ENCODE measurements at regions of chr9 and their contacts with region 1.

Region 1: DNA sequence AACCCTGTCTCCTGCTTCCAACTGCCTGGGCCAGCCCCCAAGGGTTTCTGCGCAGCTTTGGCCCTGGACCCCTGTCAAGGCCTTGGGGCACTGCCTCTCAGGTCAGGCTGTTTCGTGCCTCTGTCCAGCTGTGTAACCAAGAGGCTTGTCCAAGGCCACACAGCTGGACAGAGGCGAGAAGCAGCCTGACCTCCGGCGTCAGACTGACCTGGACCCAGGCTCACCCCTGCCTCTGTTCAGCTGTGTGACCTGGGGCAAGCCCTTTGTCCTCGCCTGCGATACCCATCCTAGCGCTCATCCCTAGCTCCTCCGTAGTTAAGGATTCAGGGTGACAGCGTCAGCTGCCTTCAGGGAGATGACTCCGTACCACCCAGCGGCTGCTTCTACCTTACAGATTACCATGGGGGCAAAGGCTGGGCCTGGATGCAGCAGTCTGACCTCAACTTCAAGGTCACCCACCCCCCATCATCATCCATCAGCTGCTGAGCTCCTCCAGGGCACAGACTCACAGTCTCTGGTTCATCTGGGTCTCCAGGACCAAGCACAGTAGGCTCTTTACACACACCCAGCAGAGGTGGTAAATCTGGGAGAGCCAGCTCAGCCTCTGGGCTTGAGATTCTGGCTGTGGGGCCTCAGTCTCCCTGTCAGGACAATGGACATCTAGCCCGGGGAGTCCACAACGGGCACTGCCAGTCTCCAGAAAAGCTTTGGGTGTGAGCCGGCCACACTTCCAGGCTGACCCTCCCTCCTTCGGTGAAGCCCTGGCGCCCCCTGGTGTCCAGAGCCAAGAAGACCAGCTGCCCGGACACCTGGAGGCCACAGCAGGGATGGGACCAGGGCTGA is 7.9 kb downstream of the AK1 start:
- DNase-seq: peak; percentile 97
- H3K4me3 ChIP-seq: peak overlapping the region in 1 of 2 experiments; percentile 46; a peak in 1 of 4 replicates
- H3K27ac ChIP-seq: no peak overlapping the region
- H3K4me1 ChIP-seq: peaks cover 0 to 12% of the 10 kb centered on the region in 2 experiments; a peak in 1 of 4 replicates
- H3K27me3 ChIP-seq: no peaks in the 10 kb centered on the region
- CTCF ChIP-seq: peak; percentile 83
- EP300 ChIP-seq: no peak
- RAD21 ChIP-seq: peak; percentile 95

Region 2: GRCh38 chr9:127742435-127743088 is 127.0 kb before region 1 on chr9:
- CTCF ChIA-PET with region 1: interaction called, 18 read pairs
- POLR2A ChIA-PET with region 1: interaction called, 3 read pairs
- DNase-seq: peak; percentile 81
- H3K4me3 ChIP-seq: no peak overlapping the region
- H3K27ac ChIP-seq: no peak overlapping the region
- H3K4me1 ChIP-seq: no peaks in the 10 kb centered on the region; a peak in 1 of 4 replicates
- H3K27me3 ChIP-seq: no peaks in the 10 kb centered on the region
- CTCF ChIP-seq: no peak
- EP300 ChIP-seq: no peak
- RAD21 ChIP-seq: no peak

Region 3: DNA sequence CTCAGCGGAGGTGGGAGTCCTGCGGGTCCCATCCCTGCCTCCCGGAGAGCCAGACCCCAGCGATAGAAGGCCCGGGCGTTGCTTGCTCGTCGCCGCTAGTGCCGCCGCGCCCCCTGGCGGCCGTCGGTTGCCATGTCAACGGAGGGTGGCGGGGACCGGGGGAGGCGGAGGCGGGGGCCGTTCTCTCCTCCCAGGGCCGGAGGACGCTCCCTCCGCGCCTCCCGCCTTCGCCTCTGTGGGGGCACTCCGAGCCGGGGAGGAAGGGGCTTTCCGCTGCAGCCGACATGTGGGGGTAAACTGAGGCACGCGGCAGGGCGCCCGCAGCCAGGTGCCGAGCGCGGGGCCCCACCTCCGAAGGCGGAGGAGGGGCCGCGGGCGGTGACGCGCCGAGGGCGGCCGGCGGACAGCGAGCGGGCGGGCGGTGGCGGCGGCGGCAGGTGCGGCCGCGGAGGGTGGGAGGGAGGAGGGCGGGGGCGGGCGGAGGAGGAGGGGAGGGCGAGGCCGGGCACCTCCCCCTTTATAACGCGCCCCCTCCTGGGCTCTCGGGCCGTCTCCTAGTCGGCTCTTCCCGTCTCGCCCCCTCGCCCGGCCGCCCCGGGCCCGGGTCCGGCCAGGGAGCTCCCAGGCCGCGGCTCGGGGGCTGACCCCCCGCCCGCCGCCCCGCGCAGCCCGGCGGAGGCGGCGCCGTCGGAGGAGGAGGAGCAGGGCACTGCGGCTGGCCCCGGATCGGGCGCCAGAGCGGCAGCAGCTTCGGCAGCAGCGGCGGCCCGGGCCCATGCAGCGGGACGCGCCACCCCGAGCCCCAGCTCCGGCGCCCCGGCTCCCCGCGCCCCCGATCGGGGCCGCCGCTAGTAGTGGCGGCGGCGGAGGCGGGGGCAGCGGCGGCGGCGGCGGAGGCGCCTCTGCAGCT is 84.3 kb before region 1 on chr9:
- CTCF ChIA-PET with region 1: interaction called, 87 read pairs
- POLR2A ChIA-PET with region 1: no interaction called
- DNase-seq: peak; percentile 97
- H3K4me3 ChIP-seq: peak overlapping the region; percentile 82 to 90
- H3K27ac ChIP-seq: peak overlapping the region; percentile 47 to 92; a peak in 3 of 4 replicates
- H3K4me1 ChIP-seq: peaks cover 6 to 18% of the 10 kb centered on the region in 2 experiments
- H3K27me3 ChIP-seq: no peaks in the 10 kb centered on the region
- CTCF ChIP-seq: peak; percentile 79
- EP300 ChIP-seq: no peak
- RAD21 ChIP-seq: peak; percentile 80

Region 4: GRCh38 chr9:127817881-127818434 is 51.6 kb before region 1 on chr9:
- CTCF ChIA-PET with region 1: interaction called, 17 read pairs
- POLR2A ChIA-PET with region 1: interaction called, 4 read pairs
- DNase-seq: peak; percentile 85
- H3K4me3 ChIP-seq: no peak overlapping the region
- H3K27ac ChIP-seq: peak overlapping the region in 1 of 2 experiments; percentile 87; a peak in 2 of 4 replicates
- H3K4me1 ChIP-seq: peaks cover 0 to 39% of the 10 kb centered on the region in 2 experiments; a peak in 1 of 4 replicates
- H3K27me3 ChIP-seq: no peaks in the 10 kb centered on the region
- CTCF ChIP-seq: no peak
- EP300 ChIP-seq: no peak; a peak in 1 of 4 replicates
- RAD21 ChIP-seq: no peak

Region 5: GRCh38 chr9:127854184-127854806 is 15.2 kb before region 1 on chr9 and contains the start of gene ENG:
- CTCF ChIA-PET with region 1: interaction called, 116 read pairs
- POLR2A ChIA-PET with region 1: no interaction called
- DNase-seq: peak; percentile 85
- H3K4me3 ChIP-seq: peak within 1 kb of the TSS; percentile 62 to 81
- H3K27ac ChIP-seq: peak within 1 kb of the TSS; percentile 58 to 86; a peak in 3 of 4 replicates
- H3K4me1 ChIP-seq: peaks cover 6 to 33% of the 10 kb centered on the region in 2 experiments; a peak in 2 of 4 replicates
- H3K27me3 ChIP-seq: no peaks in the 10 kb centered on the region
- CTCF ChIP-seq: peak; percentile 37
- EP300 ChIP-seq: no peak
- RAD21 ChIP-seq: no peak
- polyA plus RNA-seq, gene ENG: 8.8 and 18.8 TPM in 2 replicates

Region 6: GRCh38 chr9:127916665-127917613 is 47.4 kb after region 1 on chr9 and contains the start of gene ST6GALNAC4:
- CTCF ChIA-PET with region 1: interaction called, 31 read pairs
- POLR2A ChIA-PET with region 1: interaction called, 6 read pairs
- DNase-seq: peak; percentile 98
- H3K4me3 ChIP-seq: peak within 1 kb of the TSS; percentile 56 to 84
- H3K27ac ChIP-seq: peak within 1 kb of the TSS; percentile 58 to 95
- H3K4me1 ChIP-seq: peaks cover 20 to 35% of the 10 kb centered on the region in 2 experiments; a peak in 3 of 4 replicates
- H3K27me3 ChIP-seq: no peaks in the 10 kb centered on the region
- CTCF ChIP-seq: no peak
- EP300 ChIP-seq: no peak
- RAD21 ChIP-seq: no peak
- polyA plus RNA-seq, gene ST6GALNAC4: 28.4 and 30.2 TPM in 2 replicates